WTC11 (cell line): ENCODE measurements at regions of chr14 and their contacts with region 1.

Region 1: DNA sequence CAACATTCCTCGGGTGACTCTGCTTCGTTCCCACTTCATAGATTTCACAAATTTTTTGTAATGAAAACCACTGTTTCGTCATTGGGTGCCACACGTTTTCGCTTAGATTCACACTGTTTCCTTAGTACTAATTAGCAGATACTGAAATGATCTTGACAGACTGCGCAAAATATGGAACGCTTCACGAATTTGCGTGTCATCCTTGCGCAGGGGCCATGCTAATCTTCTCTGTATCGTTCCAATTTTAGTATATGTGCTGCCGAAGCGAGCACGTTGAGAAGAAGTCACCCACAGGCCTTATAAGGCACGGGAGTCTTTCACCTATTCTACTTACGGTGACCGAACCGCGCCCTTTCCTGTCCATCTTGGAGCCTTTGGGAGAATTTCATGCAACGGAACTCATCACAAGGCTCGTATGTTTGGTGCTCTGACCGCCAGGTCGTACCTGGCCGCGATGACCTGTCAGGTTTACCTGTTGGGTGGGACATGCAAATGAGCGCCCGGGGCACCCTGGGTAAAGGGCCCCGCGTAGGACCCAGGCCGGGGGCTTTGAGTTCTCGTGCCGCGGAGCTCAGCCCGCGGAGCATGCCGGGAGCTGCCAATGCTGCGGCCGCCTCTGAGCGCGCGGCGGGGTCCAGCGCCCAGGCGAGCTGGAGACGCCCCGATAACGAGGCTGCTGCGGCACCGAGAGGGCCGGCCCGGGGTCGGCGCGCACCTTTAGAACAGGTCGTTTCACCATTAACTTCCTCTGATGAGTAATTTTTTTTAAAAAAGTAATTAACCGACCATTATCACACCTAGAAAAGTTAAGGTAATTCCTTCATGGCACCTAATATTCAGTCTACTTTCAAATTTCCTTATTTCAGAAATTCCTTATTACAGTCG is at the start of gene RNU6-8:
- DNase-seq: peak; percentile 89
- ATAC-seq: peak; percentile 74
- H3K4me3 Mint-ChIP-seq: peak within 1 kb of the TSS; percentile 94
- H3K27ac Mint-ChIP-seq: peak within 1 kb of the TSS; percentile 100
- H3K4me1 Mint-ChIP-seq: peaks cover 20% of the 10 kb centered on the region
- H3K27me3 Mint-ChIP-seq: peaks cover 15% of the 10 kb centered on the region
- CTCF ChIP-seq: no peak
- total RNA-seq, gene RNU6-8: not detected in 3 replicates

Region 2: DNA sequence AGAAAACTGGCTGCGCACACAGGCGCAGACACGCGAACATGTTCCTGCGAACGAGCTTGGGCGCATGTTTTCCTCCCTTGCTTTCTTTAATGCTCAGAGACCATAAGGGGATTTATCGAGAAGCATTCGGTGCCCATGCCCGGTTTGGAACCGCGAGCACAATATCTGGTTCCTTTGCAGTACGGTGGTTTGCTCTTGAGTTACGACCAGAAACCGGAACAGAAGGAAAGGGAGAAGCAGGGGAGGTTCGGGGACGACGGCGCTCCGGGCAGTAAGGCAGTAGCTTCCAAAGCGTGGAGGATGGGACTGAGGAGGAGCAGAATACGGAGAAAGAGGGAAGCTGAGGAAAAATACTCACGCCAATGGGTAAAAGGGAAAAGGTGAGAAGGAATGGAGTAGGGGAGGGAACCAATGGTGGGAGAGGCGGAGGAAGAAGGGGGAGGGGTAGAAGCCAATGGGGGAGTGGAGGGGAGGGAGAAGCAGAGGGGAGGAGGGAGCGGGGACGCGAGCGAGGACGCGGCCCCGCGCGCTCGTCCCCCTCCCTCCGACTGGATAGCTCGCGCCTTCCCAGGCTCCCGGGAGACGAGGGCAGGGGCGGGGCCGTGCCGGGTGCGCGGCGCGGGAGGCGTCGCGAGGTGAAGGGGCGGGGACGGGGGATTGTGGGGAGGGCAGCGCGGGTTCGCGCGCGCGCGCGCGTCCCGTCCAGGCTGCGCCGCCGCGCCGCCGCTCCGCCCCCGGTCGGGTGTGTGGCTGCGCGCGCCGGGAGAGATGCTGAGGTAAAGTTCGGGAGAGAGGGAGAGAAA is 126.8 kb before region 1 on chr14:
- CTCF ChIA-PET with region 1: interaction called, 7 read pairs
- POLR2A ChIA-PET with region 1: interaction called, 11 read pairs
- DNase-seq: peak; percentile 95
- ATAC-seq: peak; percentile 87
- H3K4me3 Mint-ChIP-seq: peak overlapping the region; percentile 99
- H3K27ac Mint-ChIP-seq: peak overlapping the region; percentile 99
- H3K4me1 Mint-ChIP-seq: peaks cover 43% of the 10 kb centered on the region
- H3K27me3 Mint-ChIP-seq: no peaks in the 10 kb centered on the region
- CTCF ChIP-seq: no peak